WTC11 (cell line): ENCODE measurements at regions of chr15 and their contacts with region 1.

Region 1: DNA sequence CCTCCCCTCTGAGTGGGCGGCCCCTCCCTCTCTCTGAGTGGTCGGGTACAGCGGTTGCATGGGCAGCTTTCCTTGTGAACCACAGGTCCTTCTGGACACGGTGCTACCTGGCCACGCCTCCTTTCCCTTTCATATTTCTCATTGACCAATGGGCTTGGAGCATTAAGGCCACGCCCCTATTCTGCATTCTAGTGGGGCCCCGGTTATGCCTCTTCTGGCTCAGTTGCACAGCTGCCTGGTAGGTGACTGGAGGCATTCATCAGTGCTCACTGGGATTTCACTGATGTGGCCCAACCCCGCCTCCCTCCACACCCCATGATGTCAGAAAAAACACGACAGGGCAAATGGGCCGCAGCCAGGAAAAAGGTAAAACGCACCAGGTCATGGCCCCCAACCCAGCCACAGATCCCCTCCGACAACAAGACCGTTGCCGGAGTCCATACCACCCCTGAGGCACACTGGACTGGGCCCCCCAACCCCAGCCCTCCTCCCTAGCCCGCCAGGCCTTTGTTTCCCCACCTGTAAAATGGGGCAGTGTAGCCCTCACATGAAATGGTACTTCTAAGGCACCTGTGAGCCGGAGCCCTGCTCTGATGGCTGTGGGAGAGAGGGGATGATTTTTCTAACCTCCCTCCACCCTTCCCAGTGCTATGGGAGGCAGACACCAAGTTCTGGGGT is 26.3 kb downstream of the NGRN start:
- DNase-seq: peak; percentile 41
- ATAC-seq: no peak
- H3K4me3 Mint-ChIP-seq: no peak overlapping the region
- H3K27ac Mint-ChIP-seq: no peak overlapping the region
- H3K4me1 Mint-ChIP-seq: peaks cover 35% of the 10 kb centered on the region
- H3K27me3 Mint-ChIP-seq: no peaks in the 10 kb centered on the region
- CTCF ChIP-seq: no peak

Region 2: GRCh38 chr15:90249203-90249863 is 42.5 kb before region 1 on chr15 and contains the start of gene TTLL13:
- CTCF ChIA-PET with region 1: interaction called, 14 read pairs
- POLR2A ChIA-PET with region 1: interaction called, 3 read pairs
- DNase-seq: peak; percentile 82
- ATAC-seq: peak; percentile 95
- H3K4me3 Mint-ChIP-seq: peak within 1 kb of the TSS; percentile 72
- H3K27ac Mint-ChIP-seq: no peak within 1 kb of the TSS; the same call in 1 of the 2 replicates
- H3K4me1 Mint-ChIP-seq: peaks cover 8% of the 10 kb centered on the region; the same call in 1 of the 2 replicates
- H3K27me3 Mint-ChIP-seq: peaks cover 16% of the 10 kb centered on the region
- CTCF ChIP-seq: no peak
- total RNA-seq, gene TTLL13: 0.18 to 0.76 TPM (median 0.48 TPM) in 3 replicates

Region 3: DNA sequence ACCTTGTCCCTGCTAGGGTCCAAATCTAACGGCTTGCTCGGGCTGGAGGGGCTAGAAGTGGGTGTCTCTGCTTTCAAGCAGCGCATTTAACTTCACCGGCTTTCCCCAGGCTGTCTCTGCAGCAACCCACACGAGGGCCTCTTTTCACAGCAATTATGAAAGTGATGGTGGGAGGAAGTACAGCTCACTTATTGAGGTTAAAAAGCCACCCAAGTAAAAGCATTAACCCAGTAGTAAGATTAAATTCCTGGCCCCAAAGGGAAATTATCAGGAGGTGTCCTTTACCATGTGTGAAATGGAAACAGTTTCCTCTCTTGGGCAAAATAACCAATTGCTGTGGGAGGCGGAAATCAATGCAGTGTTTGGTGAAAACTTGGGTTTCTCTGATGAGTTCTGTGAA is 14.7 kb after region 1 on chr15:
- CTCF ChIA-PET with region 1: interaction called, 30 read pairs
- POLR2A ChIA-PET with region 1: no interaction called
- DNase-seq: no peak
- ATAC-seq: no peak
- H3K4me3 Mint-ChIP-seq: no peak overlapping the region
- H3K27ac Mint-ChIP-seq: no peak overlapping the region
- H3K4me1 Mint-ChIP-seq: peaks cover 6% of the 10 kb centered on the region
- H3K27me3 Mint-ChIP-seq: no peaks in the 10 kb centered on the region; the same call in 1 of the 2 replicates
- CTCF ChIP-seq: no peak

Region 4: DNA sequence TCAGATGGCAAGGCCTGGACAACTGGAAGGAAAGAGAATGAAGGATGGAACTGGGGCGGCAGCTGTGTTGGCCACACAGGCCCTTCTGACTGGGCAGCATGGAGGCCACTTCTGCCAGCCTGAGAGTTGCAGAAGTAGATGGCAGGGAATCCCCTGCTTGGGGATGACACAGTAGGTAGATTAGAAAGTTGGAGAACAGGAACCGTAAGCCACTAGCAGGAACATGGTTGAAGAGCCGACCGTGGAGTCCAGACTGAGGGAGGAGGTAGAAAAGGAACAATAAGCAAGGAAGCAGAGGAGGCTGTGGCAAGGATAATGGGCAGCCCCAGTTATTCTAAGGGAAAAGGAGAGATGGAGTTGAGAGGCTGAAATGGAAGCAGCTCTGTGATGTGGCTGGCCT is 33.9 kb after region 1 on chr15:
- CTCF ChIA-PET with region 1: interaction called, 68 read pairs
- POLR2A ChIA-PET with region 1: no interaction called
- DNase-seq: no peak
- ATAC-seq: no peak
- H3K4me3 Mint-ChIP-seq: no peak overlapping the region
- H3K27ac Mint-ChIP-seq: no peak overlapping the region
- H3K4me1 Mint-ChIP-seq: peaks cover under 1% of the 10 kb centered on the region; the same call in 1 of the 2 replicates
- H3K27me3 Mint-ChIP-seq: no peaks in the 10 kb centered on the region
- CTCF ChIP-seq: no peak

Region 5: DNA sequence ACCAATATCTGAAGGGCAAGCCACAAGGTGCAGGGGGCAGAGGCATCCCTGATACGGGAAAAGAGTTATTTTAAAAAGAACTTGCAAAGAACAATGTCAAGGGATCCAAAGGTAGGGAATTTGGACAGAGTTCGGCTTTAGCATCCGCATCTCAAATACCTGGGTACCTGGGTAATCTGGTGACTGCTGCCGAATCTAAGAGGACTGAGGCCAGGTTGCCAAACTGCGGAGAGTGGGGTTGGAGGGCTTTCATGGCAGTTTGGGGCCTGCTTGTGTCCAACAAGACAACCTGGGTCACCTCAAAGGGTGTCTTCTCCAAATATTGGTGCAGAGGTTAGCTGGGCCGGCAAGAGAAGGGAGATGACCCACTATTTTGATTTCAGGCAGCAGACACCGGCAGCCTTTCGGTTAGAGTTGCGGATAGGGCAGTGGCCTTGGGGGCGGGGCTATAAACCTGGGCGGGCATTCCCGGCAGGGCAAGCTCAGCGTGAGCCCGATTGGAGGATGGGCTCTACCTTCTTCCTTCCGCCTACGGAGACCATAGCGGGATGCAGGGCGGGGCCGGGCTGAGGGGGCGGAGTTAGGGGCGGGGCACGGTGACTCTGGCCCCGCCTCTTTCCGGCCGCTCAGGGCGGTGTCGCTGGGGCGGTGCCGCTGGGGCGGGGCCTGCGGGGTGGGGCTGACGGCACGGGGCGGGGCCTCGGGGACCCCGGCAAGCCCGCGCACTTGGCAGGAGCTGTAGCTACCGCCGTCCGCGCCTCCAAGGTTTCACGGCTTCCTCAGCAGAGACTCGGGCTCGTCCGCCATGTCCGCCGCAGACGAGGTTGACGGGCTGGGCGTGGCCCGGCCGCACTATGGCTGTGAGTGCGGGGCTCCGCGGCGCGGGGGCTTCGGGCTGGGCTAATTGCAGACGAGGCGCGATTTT is 96.0 kb after region 1 on chr15 and contains the start of gene IQGAP1:
- CTCF ChIA-PET with region 1: interaction called, 10 read pairs
- POLR2A ChIA-PET with region 1: interaction called, 4 read pairs
- DNase-seq: peak; percentile 99
- ATAC-seq: peak; percentile 94
- H3K4me3 Mint-ChIP-seq: peak within 1 kb of the TSS; percentile 83
- H3K27ac Mint-ChIP-seq: peak within 1 kb of the TSS; percentile 89
- H3K4me1 Mint-ChIP-seq: peaks cover 39% of the 10 kb centered on the region
- H3K27me3 Mint-ChIP-seq: no peaks in the 10 kb centered on the region
- CTCF ChIP-seq: no peak
- total RNA-seq, gene IQGAP1: 83.0 to 106 TPM (median 86.8 TPM) in 3 replicates

Region 6: GRCh38 chr15:90400406-90401314 is 108.8 kb after region 1 on chr15:
- CTCF ChIA-PET with region 1: no interaction called
- POLR2A ChIA-PET with region 1: no interaction called
- DNase-seq: peak; percentile 49
- ATAC-seq: peak; percentile 96
- H3K4me3 Mint-ChIP-seq: peak overlapping the region; percentile 50
- H3K27ac Mint-ChIP-seq: peak overlapping the region; percentile 97
- H3K4me1 Mint-ChIP-seq: peaks cover 60% of the 10 kb centered on the region
- H3K27me3 Mint-ChIP-seq: no peaks in the 10 kb centered on the region
- CTCF ChIP-seq: no peak

Region 7: DNA sequence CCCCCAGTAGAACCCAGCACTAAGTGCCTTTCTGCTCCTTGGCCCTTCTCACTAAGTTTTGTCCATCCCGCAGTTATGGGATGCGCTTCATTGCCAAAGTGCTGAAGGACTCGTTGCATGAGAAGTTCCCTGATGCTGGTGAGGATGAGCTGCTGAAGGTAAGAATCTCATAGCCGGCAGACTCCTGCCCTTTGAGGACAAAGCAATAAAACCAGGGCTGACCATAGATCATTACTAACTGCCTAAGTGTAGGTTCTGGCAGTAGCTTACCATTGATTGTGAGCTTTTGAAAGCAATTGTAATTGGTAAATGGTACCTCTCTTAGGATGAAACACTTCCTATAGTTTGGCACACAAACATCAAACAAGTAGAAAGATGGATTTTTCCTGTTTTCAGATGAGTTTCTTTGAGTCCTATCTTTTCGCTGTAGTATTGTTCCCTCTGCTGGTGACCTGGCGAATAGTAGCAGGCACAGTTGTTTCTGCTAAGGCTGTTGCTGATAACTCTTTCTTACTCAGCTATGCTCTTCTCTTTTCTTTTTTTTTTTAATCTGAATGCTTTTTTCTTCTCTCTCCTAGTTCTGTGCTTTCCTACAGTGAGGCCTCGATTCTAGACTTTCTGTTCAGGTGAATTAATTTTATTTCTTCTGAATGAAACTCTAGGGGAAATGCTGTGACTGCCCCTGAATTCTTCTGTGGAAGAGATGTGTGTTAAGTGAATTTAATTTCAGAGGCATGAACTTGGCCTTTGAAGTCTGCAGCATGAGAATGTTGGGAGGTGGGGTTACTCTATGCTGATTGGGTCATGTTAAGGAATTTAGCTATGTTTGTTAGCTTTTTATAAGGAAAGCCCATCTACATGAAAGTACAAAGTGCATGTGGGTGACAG is 190.6 kb after region 1 on chr15:
- CTCF ChIA-PET with region 1: interaction called, 30 read pairs
- POLR2A ChIA-PET with region 1: no interaction called
- DNase-seq: peak; percentile 60
- ATAC-seq: peak; percentile 55
- H3K4me3 Mint-ChIP-seq: no peak overlapping the region
- H3K27ac Mint-ChIP-seq: no peak overlapping the region
- H3K4me1 Mint-ChIP-seq: no peaks in the 10 kb centered on the region
- H3K27me3 Mint-ChIP-seq: no peaks in the 10 kb centered on the region
- CTCF ChIP-seq: no peak; the same call in 1 of the 2 replicates

Region 8: GRCh38 chr15:90571063-90571541 is 279.3 kb after region 1 on chr15:
- CTCF ChIA-PET with region 1: no interaction called
- POLR2A ChIA-PET with region 1: no interaction called
- DNase-seq: no peak
- ATAC-seq: no peak
- H3K4me3 Mint-ChIP-seq: no peak overlapping the region
- H3K27ac Mint-ChIP-seq: no peak overlapping the region
- H3K4me1 Mint-ChIP-seq: no peaks in the 10 kb centered on the region
- H3K27me3 Mint-ChIP-seq: no peaks in the 10 kb centered on the region
- CTCF ChIP-seq: no peak